Endothelial cell of umbilical vein (primary cell): ENCODE measurements at regions of chr19 and their contacts with region 1.

Region 1: GRCh38 chr19:56367829-56368711 is 25.3 kb downstream of the ZNF582 start:
- DNase-seq: peak; percentile 98
- H3K4me3 ChIP-seq: peak overlapping the region; percentile 29 to 89 (median 88)
- H3K27ac ChIP-seq: peak overlapping the region; percentile 7
- H3K4me1 ChIP-seq: peaks cover 7% of the 10 kb centered on the region
- H3K27me3 ChIP-seq: no peaks in the 10 kb centered on the region
- CTCF ChIP-seq: no peak
- POLR2A ChIP-seq: peak; percentile 64

Region 2: GRCh38 chr19:56273563-56274117 is 94.4 kb before region 1 on chr19:
- CTCF ChIA-PET with region 1: no interaction called
- POLR2A ChIA-PET with region 1: no interaction called
- dilution Hi-C with region 1: no loop called
- intact Hi-C with region 1: no loop called
- DNase-seq: peak; percentile 80
- H3K4me3 ChIP-seq: no peak overlapping the region
- H3K27ac ChIP-seq: peak overlapping the region; percentile 64
- H3K4me1 ChIP-seq: peaks cover 27% of the 10 kb centered on the region
- H3K27me3 ChIP-seq: no peaks in the 10 kb centered on the region
- CTCF ChIP-seq: no peak
- POLR2A ChIP-seq: no peak

Region 3: DNA sequence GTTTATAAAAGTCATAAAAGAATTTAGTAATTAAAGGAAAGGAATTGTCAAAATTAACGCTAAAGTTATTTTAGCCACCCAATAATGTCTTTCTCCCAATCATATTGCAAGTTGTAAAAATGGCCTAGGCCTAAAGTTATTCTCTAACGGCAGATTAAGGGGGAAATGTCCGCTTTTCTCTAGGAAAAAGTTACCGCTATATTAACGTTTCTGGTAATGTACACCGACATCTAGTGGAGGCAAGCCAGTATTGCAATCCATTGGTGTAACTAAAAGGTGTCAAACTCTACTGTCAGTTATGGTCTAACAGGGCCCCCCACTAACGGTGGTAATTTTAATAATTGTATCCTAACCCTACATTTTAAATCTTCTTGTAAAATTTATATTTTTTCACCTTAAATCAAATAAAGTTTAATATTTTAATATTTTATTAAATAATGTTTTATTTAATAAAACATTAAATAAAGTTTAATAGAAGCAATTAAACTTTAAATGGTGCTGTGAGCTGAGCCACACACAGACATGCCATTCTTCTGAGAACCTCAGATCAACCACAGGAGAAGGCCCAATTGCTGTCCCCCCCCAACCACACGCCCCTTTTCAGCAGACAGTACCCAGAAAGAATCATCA is 17.5 kb before region 1 on chr19:
- CTCF ChIA-PET with region 1: interaction called, 14 read pairs
- POLR2A ChIA-PET with region 1: no interaction called
- dilution Hi-C with region 1: no loop called
- intact Hi-C with region 1: no loop called
- DNase-seq: peak; percentile 55
- H3K4me3 ChIP-seq: no peak overlapping the region
- H3K27ac ChIP-seq: no peak overlapping the region
- H3K4me1 ChIP-seq: no peaks in the 10 kb centered on the region
- H3K27me3 ChIP-seq: no peaks in the 10 kb centered on the region
- CTCF ChIP-seq: peak; percentile 56 to 75
- POLR2A ChIP-seq: no peak

Region 4: GRCh38 chr19:56393119-56394012 is 25.3 kb after region 1 on chr19 and contains the start of gene ZNF582:
- CTCF ChIA-PET with region 1: interaction called, 3 read pairs
- POLR2A ChIA-PET with region 1: no interaction called
- dilution Hi-C with region 1: no loop called
- intact Hi-C with region 1: loop called (anchors 1 kb)
- DNase-seq: peak; percentile 94
- H3K4me3 ChIP-seq: peak within 1 kb of the TSS in 2 of 3 experiments; percentile 17 to 64
- H3K27ac ChIP-seq: peak within 1 kb of the TSS; percentile 26
- H3K4me1 ChIP-seq: no peaks in the 10 kb centered on the region
- H3K27me3 ChIP-seq: no peaks in the 10 kb centered on the region
- CTCF ChIP-seq: peak; percentile 75 to 87
- POLR2A ChIP-seq: peak; percentile 70
- total RNA-seq, gene ZNF582: 2.2 and 2.9 TPM in 2 replicates

Region 5: DNA sequence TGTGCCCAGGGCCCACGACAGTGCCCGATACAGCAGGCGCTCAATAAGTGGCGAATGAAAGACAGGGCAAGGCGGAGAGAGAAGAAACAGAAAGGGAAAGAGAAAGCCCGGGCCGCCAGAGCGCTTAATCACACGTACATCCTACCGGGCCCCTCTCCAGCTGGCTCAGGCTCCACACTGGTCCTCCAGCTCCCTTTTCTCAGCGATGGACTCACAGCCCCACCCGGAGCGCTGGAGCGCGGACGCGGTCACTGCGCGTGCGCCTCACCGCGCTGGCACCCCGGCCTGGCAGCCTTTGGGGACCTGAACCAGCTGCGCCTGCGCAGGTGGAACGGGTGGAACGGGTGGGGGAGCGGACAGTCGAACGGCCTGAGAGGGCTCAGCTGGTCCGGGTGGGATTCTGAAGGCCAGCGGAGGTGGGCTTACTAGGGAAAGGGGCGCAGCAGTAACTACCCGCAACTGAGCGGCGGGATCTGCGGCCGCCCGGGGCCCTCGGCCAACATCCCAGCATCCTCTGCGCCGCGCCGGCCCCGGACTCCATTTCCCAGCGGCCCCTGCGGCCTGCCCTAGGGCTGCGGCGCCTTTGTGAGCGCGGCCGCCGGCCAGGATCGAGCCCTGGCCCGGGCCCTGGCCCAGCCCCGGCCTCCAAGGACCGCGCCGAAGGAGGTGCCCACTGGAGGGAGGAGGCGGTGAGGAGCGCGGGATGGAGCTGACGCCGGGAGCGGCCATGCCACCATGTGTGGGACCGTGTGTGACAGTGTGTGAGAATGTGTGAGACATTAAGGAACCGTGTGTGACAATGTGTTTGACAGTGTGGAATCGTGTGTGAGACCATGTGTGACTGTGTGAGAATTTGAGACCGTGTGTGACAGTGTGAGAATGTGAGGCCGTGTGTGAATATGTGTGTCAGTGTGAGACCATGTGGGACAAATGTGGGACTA is 36.0 kb after region 1 on chr19 and contains the start of gene ZNF583:
- CTCF ChIA-PET with region 1: no interaction called
- POLR2A ChIA-PET with region 1: no interaction called
- dilution Hi-C with region 1: no loop called
- intact Hi-C with region 1: loop called (anchors 2 kb)
- DNase-seq: peak; percentile 98
- H3K4me3 ChIP-seq: peak within 1 kb of the TSS; percentile 42 to 81 (median 53)
- H3K27ac ChIP-seq: peak within 1 kb of the TSS; percentile 57
- H3K4me1 ChIP-seq: peaks cover 8% of the 10 kb centered on the region
- H3K27me3 ChIP-seq: no peaks in the 10 kb centered on the region
- CTCF ChIP-seq: no peak
- POLR2A ChIP-seq: peak; percentile 32
- total RNA-seq, gene ZNF583: 2.4 and 4.8 TPM in 2 replicates